HCT116 (cell line): ENCODE measurements at regions of chr6 and their contacts with region 1.

Region 1: DNA sequence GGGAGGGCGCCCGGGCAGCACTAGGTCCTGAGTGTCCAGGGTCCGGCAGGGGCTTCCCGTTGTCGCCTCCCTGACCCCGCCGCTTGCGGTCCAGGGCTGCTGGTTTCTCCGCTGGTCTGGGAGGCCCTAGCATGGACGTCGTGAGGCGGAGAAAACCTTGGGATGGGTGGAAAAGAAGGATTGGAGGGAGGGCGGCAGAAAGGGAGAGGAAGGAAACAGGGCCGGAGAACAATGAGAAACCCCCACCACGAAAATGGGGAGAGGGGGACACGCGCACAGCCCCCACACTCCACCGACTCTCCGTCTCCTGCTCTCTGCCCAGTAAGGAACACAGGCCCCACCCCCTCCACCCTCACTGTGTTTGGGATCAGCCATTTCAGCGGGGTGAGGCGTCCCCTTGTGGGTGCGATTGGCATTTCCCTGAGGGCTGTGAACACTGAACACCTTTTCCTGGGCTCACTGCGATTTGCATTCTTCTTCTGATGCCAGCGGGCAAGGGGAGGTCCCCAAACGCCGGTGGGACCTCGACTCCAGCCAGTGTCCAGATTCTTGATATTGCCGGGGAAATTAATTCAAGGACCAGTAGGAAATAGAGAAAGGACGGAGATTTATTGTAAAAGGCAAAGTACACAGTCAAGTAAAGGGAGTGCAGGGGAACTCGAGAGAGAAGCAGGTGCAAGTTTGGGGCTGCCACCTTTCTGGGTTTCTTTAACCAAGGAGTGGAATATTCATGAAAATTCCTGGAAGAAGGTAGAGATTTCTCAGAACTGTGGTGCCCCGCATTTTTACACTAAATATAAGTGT is 3.3 kb upstream of the RAET1G start:
- DNase-seq: peak; percentile 51
- ATAC-seq: peak; percentile 95
- H3K4me3 ChIP-seq: peak overlapping the region; percentile 19 to 30; a peak in 3 of 4 replicates
- H3K27ac ChIP-seq: no peak overlapping the region; the same call in 1 of the 2 replicates
- H3K4me1 ChIP-seq: peaks cover 3 to 22% of the 10 kb centered on the region in 2 experiments; a peak in 3 of 4 replicates
- H3K27me3 ChIP-seq: 0 out of 2 replicates have a peak, but pooled peaks cover 4% of the 10 kb centered on the region
- CTCF ChIP-seq: peak; percentile 85 to 93 (median 92)
- POLR2A ChIP-seq: no peak
- RAD21 ChIP-seq: peak; percentile 99

Region 2: DNA sequence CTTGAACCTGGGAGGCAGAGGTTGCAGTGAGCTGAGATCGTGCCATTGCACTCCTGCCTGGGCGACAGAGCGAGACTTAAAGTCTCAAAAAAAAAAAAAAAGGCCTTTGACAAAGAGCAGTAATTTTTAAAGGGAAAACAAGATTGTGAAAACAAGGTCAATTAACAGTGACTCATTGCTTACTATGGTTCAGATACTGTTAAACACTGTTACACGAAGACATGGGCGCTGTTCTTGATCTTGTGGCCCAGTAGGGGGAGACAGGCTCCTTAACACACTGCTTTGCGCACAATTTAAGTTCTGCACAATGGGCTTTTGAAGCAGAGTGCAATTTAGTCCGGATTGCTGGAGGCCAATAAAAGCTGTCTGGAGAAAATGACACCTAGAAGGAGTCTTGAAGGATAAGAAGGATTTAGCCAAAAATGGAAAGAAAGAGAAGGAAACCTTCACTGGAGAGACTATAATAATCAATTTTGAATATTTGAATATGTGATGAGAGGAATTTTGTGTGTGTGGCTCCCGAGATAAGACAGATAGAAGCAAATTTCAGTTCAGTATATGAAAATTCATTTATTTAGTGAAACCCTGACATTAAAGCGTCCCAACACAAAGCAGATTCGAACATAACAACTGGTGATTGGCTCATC is 202.3 kb before region 1 on chr6:
- CTCF ChIA-PET with region 1: no interaction called
- POLR2A ChIA-PET with region 1: no interaction called
- RAD21 ChIA-PET with region 1: no interaction called
- intact Hi-C with region 1: loop called (anchors 1 kb)
- DNase-seq: peak; percentile 60
- ATAC-seq: peak; percentile 96
- H3K4me3 ChIP-seq: no peak overlapping the region
- H3K27ac ChIP-seq: no peak overlapping the region
- H3K4me1 ChIP-seq: peaks cover 0 to under 1% of the 10 kb centered on the region in 2 experiments; a peak in 1 of 4 replicates
- H3K27me3 ChIP-seq: no peaks in the 10 kb centered on the region
- CTCF ChIP-seq: peak; percentile 77 to 85 (median 81)
- POLR2A ChIP-seq: no peak
- RAD21 ChIP-seq: peak; percentile 78

Region 3: DNA sequence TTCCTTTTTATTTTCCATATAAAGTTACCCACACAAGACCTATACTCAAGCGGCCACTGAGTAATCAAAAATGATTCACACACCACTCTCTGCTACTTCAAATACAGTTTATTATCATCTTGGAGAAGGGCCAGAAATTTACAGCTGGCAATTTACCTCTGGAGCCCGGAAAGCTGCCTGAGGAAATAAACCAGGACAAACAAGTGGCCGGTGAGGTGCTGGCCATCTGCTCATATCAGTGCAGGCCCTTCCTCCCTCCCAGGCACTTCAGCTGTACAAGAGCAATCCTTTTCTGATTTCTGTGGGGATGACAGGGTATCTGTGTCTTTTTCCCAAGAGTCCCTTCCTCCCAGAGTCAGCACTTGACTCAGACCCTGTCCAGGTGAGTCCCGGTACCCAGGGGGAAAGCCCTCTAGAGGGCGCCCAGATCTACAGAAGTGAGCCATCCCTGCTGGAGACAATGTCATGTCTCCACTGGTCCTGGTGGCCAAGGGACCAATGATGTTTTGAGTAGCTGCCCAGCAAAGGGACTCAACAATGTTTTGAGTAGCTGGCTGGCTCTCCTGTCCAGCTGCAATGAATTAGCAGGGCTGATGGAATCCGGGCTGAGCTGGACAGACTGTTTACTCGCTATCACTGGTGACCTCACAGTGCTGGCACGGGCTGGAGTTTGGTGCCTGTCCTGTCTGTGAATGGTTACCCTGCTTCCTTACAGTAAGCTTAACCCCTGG is 85.7 kb before region 1 on chr6:
- CTCF ChIA-PET with region 1: interaction called, 4 read pairs
- POLR2A ChIA-PET with region 1: no interaction called
- RAD21 ChIA-PET with region 1: no interaction called
- intact Hi-C with region 1: loop called (anchors 1 kb)
- DNase-seq: peak; percentile 68
- ATAC-seq: peak; percentile 99
- H3K4me3 ChIP-seq: no peak overlapping the region
- H3K27ac ChIP-seq: no peak overlapping the region
- H3K4me1 ChIP-seq: peaks cover 19 to 36% of the 10 kb centered on the region in 2 experiments
- H3K27me3 ChIP-seq: no peaks in the 10 kb centered on the region
- CTCF ChIP-seq: peak; percentile 84 to 93 (median 92)
- POLR2A ChIP-seq: no peak
- RAD21 ChIP-seq: peak; percentile 96

Region 4: DNA sequence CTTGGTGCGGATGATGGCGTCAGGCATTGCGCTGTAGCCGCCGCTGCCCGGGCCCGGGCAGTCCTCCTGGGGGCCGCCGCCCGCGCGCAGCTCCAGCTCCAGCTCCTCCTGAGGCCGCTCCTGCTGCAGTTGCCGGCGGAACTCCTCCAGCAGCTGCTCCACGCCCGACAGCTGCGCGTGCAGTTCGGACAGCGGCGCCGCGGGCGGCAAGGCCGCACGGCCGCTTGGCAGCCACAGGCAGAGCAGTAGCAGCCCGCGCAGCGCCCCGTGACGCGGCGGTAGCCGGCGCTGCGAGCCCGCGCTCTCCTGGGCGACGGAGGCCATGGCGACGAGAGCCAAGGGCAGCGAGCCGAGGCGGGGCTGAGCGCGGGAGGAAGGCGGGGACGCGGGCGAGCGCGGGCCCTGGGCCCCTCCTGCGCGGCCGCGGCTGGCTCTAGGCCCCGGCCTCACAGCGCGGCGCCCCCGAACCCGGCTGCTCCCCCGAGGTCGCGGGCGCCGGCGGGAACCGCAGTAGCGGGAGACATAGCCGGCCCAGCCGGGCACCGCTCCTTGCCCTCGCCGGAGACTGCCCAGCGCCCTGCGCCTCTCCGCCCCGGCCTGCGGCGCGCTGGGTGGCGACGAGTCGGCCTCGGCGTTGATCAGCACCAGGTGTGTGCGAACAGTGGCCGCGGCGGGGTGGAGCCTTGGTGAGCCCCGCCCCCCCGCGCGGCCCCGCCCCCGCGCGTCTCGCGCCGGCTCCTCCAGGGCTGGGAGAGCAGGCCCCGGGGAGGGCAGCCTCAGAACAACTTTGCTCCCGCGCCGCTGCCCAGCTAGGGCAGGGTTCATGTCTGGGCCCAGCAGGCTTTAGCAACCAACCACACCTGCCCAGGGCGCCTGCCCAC is 62.2 kb before region 1 on chr6 and contains the start of gene LRP11:
- CTCF ChIA-PET with region 1: no interaction called
- POLR2A ChIA-PET with region 1: no interaction called
- RAD21 ChIA-PET with region 1: no interaction called
- intact Hi-C with region 1: loop called (anchors 2 kb)
- DNase-seq: no peak
- ATAC-seq: peak; percentile 84
- H3K4me3 ChIP-seq: peak within 1 kb of the TSS; percentile 54 to 71
- H3K27ac ChIP-seq: peak within 1 kb of the TSS; percentile 90
- H3K4me1 ChIP-seq: peaks cover 8 to 44% of the 10 kb centered on the region in 2 experiments; a peak in 3 of 4 replicates
- H3K27me3 ChIP-seq: no peaks in the 10 kb centered on the region
- CTCF ChIP-seq: no peak
- POLR2A ChIP-seq: peak; percentile 54
- RAD21 ChIP-seq: no peak
- total RNA-seq, gene LRP11: 27.8 TPM